Activated CD4-positive, alpha-beta memory T cell treated with anti-CD3 and anti-CD28 coated beads, Interleukin-2, amount 10 ng/mL, durations not matched to agents 7 days and 5 days (primary cell): ENCODE measurements at regions of chr3 and their contacts with region 1.

Region 1: GRCh38 chr3:13414040-13414729 is 5.9 kb downstream of the NUP210 start:
- DNase-seq: peak; percentile 88
- H3K4me3 Mint-ChIP-seq: peak overlapping the region; percentile 70
- H3K27ac Mint-ChIP-seq: peak overlapping the region; percentile 97
- H3K4me1 Mint-ChIP-seq: peaks cover 63% of the 10 kb centered on the region
- H3K27me3 Mint-ChIP-seq: no peaks in the 10 kb centered on the region

Region 2: DNA sequence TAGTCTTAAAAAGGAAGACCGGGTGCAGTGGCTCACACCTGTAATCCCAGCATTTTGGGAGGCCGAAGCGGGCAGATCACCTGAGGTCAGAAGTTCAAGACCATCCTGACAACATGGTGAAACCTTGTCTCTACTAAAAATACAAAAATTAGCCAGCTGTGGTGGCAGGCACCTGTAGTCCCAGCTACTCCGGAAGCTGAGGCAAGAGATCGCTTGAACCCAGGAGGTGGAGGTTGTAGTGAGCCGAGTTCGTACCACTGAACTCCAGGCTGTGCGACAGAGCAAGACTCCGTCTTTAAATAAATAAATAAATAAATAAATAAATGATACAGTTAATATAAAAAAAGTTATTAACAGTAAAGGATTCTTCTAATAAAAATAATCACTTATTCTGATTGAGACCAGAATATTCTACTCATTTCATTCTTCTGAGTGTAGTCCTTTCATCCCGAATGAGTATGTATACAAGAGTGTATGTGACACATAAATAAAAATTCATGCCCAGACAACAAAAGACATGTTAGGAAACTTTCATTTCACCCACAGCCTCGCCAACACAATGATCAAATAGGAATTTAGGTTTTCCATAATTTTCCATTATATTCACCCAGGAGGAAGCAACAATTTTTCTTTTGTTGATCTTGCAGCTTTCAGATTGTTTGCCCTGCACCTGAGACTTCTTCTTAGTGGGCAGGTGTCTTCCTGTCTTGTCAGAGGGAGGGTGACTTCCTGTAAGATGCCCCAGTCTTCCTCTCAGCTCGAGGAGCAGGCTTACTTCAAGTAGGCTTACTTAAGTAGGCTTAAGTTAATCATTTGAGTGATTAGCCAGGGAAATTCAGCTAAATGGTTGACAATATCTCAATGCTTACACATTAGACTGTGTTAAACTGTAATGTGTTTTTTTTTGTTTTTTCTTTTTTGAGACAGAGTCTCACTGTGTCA is 13.7 kb after region 1 on chr3:
- CTCF ChIA-PET with region 1: interaction called, 33 read pairs
- POLR2A ChIA-PET with region 1: interaction called, 26 read pairs
- DNase-seq: peak; percentile 25
- H3K4me3 Mint-ChIP-seq: peak overlapping the region; percentile 5
- H3K27ac Mint-ChIP-seq: peak overlapping the region; percentile 80
- H3K4me1 Mint-ChIP-seq: peaks cover 36% of the 10 kb centered on the region
- H3K27me3 Mint-ChIP-seq: no peaks in the 10 kb centered on the region

Region 3: DNA sequence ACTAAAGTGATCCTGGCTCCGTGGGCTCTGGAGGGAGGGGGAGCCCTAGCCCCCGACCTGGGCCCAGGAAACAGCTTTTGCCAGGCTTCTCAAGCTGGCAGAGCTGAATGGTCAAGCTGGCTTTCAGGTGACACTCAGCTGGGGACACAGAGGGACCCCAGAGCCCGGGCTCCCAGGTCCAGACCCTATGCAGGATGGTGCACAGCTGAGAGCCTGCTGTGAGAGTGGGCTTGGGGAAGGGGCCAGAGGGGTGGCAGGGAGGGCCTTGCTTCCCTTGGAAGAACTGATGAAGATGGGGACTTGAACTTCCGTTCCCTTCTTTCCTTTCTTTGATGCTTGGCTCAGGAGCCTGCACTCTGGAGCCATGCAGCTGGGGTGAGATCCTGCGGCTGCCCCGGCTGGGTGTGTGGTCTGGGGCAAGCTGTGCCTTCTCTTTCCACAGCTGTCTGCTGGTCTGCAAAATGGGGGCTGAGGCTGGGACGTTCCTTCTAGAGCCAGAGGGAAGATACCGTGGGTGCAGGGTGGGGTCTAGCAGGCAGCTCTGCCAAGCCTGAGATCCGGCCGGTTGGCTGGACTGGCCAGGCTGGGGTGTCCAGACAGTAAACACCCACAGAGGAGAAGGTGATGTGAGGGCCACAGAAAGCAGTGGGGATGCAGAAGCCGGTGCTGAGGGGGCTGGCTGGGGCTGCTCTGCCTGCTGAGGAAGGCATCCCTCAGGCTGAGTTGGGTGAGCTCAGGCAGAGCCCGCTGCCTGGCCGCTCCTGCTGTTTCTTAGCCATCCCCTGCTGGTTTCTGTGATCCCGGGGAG is 180.6 kb after region 1 on chr3:
- CTCF ChIA-PET with region 1: no interaction called
- POLR2A ChIA-PET with region 1: no interaction called
- DNase-seq: no peak
- H3K4me3 Mint-ChIP-seq: no peak overlapping the region
- H3K27ac Mint-ChIP-seq: no peak overlapping the region
- H3K4me1 Mint-ChIP-seq: no peaks in the 10 kb centered on the region
- H3K27me3 Mint-ChIP-seq: peaks cover 19% of the 10 kb centered on the region